Posterior cingulate gyrus (tissue), 11 donors: ENCODE measurements at regions of chr2 and their contacts with region 1.

Region 1: DNA sequence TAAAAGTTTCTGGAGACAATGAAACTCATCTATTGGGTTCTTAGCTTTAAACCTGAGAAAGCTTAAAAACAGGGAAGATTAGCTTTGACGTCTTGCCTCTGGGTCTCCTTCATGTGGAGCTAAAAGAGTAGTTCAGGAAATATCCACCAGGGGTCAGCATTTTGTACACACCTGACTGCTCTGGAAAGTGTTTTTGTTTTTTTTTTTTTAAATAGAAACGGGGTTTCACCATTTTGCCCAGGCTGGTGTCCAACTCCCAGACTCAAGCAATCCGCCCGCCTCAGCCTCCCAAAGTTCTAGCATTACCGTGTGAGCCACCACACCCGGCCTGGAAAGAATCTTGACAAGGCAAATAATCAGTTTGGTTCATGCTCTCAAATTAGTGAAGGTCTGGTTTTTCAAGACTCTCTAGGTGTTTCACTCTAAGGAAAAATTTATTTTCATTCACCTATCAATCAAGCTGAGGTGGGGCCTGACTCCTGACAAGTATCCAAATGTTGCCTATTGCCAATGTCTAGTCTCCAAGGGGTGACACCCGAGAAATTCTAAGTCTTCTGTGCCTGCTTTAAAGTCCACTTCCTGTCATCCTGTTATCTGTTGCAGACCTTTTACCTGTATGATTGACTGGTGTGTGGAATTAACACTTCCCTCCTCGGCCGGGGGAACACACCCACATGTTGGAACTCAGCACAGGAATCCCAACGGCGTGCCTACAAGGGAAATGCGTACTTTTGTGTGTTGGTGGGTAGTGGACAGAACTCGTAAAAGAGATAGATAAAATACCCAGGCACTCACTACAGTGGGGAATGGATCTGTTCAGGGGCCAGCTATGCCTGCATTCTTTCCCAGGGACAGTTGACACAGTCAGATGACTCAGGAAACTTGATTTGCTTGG is 11.3 kb downstream of the IL1RN start:
- DNase-seq: no peak

Region 2: GRCh38 chr2:113050921-113051895 is 87.5 kb before region 1 on chr2:
- intact Hi-C with region 1: no loop called
- DNase-seq: no peak

Region 3: GRCh38 chr2:113198790-113199612 is 60.3 kb after region 1 on chr2:
- intact Hi-C with region 1: loop called (anchors 1 kb)
- DNase-seq: peak; percentile 69 to 98 (median 83)

Region 4: DNA sequence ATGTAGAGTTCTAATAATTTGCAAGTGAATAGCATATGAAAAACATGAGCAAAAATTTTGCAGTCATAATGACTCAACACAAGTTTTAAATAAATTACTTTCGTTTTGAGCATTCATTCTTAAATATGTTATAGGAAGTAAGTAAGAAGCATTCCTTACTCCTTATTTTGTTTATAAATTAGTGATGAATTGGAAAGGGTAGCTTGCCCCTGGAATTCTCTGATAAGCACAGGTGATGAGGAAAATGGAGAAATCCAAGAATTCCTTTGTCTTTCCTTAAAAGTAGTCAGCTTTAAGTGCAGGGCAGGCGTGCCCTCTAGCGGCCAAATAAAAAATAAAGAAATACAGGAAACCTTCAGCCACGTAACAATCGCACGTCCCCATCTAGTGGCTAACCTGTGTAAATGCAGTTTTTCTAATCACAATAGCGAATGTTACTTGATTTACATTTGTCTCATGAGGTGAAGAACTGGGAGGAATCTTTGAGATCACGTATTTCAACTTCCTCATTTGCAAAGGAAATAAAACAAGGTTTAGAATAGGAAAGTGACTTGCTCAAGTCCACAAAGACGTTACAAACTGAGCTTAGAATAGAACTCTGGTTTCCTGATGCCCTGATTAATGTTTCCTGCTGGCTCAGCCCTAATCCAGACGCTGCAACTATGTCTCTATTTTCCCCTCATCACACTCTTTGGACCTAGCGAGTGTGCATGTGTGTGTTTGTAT is 251.6 kb after region 1 on chr2:
- intact Hi-C with region 1: loop called (anchors 5 kb)
- DNase-seq: peak in 6 of 10 donors; percentile 14 to 93 (median 49)